ENCODE measurements at regions of chr1 and their contacts with region 1.

Region 1: GRCh38 chr1:204565617-204566582 is 49.7 kb downstream of the MDM4 start:
- DNase-seq: peak; percentile 85
- ATAC-seq: peak; percentile 75
- H3K4me3 ChIP-seq: no peak overlapping the region
- H3K4me3 Mint-ChIP-seq: peak overlapping the region; percentile 49
- H3K27ac ChIP-seq: peak overlapping the region; percentile 33 to 63
- H3K27ac Mint-ChIP-seq: peak overlapping the region; percentile 67
- H3K4me1 ChIP-seq: peaks cover 24 to 33% of the 10 kb centered on the region in 2 donors
- H3K4me1 Mint-ChIP-seq: peaks cover 43% of the 10 kb centered on the region
- H3K27me3 ChIP-seq: no peaks in the 10 kb centered on the region
- H3K27me3 Mint-ChIP-seq: no peaks in the 10 kb centered on the region
- CTCF ChIP-seq: peak; percentile 80

Region 2: DNA sequence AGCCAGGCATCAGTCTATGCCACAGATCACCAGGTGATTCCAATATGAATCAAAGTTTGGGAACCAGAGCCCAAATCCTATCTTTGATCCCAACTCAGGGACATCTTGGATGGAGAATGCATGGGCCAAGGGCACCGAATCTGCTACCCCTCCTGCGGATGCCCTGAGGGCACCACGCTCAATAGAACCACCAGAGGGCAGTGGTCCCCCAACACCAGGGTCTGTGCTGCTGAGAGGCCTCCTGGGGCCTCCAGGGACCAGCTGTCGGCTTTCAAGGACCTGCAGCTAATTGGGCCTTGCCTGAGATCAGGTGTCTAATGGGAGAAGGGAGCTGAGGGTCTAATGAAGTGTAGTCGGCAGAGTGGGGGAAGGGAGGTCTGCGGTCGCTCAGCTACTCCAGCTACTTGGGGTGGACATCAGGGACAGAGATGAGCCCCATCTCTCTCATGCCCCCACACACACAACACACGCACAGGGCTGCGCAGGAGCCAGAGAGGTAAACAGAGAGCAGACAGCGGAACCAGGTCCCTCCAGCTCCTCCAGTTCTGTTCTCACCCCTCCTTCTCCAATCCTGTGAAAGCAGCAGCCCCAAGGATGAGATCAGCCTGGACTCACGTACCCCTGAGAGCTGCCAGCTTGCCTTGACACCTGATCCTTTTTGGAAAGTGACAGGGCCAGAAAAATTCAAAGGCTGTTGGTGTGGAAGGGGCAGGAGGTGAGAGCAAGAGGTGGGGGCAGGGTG is 119.4 kb before region 1 on chr1:
- CTCF ChIA-PET with region 1: interaction called, 11 read pairs
- POLR2A ChIA-PET with region 1: no interaction called
- intact Hi-C with region 1: no loop called
- DNase-seq: peak; percentile 90
- ATAC-seq: peak; percentile 88
- H3K4me3 ChIP-seq: no peak overlapping the region
- H3K4me3 Mint-ChIP-seq: peak overlapping the region; percentile 52
- H3K27ac ChIP-seq: peak overlapping the region; percentile 27 to 64
- H3K27ac Mint-ChIP-seq: peak overlapping the region; percentile 81
- H3K4me1 ChIP-seq: peaks cover 57 to 59% of the 10 kb centered on the region in 2 donors
- H3K4me1 Mint-ChIP-seq: peaks cover 58% of the 10 kb centered on the region
- H3K27me3 ChIP-seq: no peaks in the 10 kb centered on the region
- H3K27me3 Mint-ChIP-seq: no peaks in the 10 kb centered on the region
- CTCF ChIP-seq: peak; percentile 89

Region 3: GRCh38 chr1:204544321-204544720 is 21.6 kb before region 1 on chr1:
- CTCF ChIA-PET with region 1: interaction called, 14 read pairs
- POLR2A ChIA-PET with region 1: no interaction called
- intact Hi-C with region 1: no loop called
- DNase-seq: no peak
- ATAC-seq: no peak
- H3K4me3 ChIP-seq: no peak overlapping the region
- H3K4me3 Mint-ChIP-seq: no peak overlapping the region
- H3K27ac ChIP-seq: peak overlapping the region in 1 of 2 donors; percentile 72
- H3K27ac Mint-ChIP-seq: peak overlapping the region; percentile 32
- H3K4me1 ChIP-seq: peaks cover 4 to 6% of the 10 kb centered on the region in 2 donors
- H3K4me1 Mint-ChIP-seq: peaks cover 24% of the 10 kb centered on the region
- H3K27me3 ChIP-seq: no peaks in the 10 kb centered on the region
- H3K27me3 Mint-ChIP-seq: no peaks in the 10 kb centered on the region
- CTCF ChIP-seq: no peak

Region 4: GRCh38 chr1:204623894-204624361 is 58.0 kb after region 1 on chr1:
- CTCF ChIA-PET with region 1: interaction called, 11 read pairs
- POLR2A ChIA-PET with region 1: no interaction called
- intact Hi-C with region 1: loop called (anchors 10 kb)
- DNase-seq: peak; percentile 19
- ATAC-seq: no peak
- H3K4me3 ChIP-seq: no peak overlapping the region
- H3K4me3 Mint-ChIP-seq: no peak overlapping the region
- H3K27ac ChIP-seq: no peak overlapping the region
- H3K27ac Mint-ChIP-seq: no peak overlapping the region
- H3K4me1 ChIP-seq: no peaks in the 10 kb centered on the region
- H3K4me1 Mint-ChIP-seq: no peaks in the 10 kb centered on the region
- H3K27me3 ChIP-seq: no peaks in the 10 kb centered on the region
- H3K27me3 Mint-ChIP-seq: peaks cover 5% of the 10 kb centered on the region
- CTCF ChIP-seq: no peak

Region 5: DNA sequence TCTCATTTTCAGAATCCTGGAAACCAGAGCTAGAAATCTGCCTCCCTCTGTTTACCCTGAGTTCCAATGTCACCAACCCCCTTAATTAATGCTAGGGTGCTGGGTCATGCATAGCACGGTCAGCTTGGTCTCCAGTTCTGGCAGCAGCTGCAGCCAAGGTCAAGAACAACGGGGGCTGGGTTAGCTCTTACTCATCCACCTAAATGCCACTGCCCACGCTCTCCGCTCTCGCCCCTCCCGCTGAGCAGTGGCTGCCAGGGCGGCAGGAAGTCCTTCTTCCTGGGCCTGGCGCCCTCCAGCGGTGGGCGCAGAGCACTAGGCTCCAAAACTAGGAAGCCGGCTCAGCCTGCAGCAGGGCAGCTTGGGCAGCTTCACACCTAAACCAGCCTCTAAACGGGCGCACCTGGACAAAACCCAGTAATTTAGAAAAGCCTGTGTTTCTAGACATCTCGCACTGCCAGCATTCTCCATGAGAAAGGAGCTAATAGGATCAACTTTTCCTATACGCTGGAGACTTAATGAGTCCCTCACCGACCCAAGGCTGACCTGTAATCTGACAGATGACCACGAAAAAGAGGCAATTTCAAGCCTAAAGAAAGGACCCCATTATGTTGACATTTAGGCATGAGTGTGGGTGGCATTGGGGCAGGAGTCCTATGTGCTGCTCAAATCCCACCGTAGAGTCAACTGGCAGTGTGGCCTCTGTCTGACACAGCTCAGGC is 198.0 kb after region 1 on chr1:
- CTCF ChIA-PET with region 1: interaction called, 54 read pairs
- POLR2A ChIA-PET with region 1: interaction called, 4 read pairs
- intact Hi-C with region 1: loop called (anchors 1 kb)
- DNase-seq: peak; percentile 75
- ATAC-seq: peak; percentile 97
- H3K4me3 ChIP-seq: no peak overlapping the region
- H3K4me3 Mint-ChIP-seq: no peak overlapping the region
- H3K27ac ChIP-seq: no peak overlapping the region
- H3K27ac Mint-ChIP-seq: no peak overlapping the region
- H3K4me1 ChIP-seq: peaks cover 7 to 8% of the 10 kb centered on the region in 2 donors
- H3K4me1 Mint-ChIP-seq: peaks cover 6% of the 10 kb centered on the region
- H3K27me3 ChIP-seq: peaks cover 0 to 18% (median 1%) of the 10 kb centered on the region in 4 experiments
- H3K27me3 Mint-ChIP-seq: peaks cover 30% of the 10 kb centered on the region
- CTCF ChIP-seq: peak; percentile 88